Dorsolateral prefrontal cortex (tissue), 120 donors: ENCODE measurements at regions of chr7 and their contacts with region 1.

Region 1: DNA sequence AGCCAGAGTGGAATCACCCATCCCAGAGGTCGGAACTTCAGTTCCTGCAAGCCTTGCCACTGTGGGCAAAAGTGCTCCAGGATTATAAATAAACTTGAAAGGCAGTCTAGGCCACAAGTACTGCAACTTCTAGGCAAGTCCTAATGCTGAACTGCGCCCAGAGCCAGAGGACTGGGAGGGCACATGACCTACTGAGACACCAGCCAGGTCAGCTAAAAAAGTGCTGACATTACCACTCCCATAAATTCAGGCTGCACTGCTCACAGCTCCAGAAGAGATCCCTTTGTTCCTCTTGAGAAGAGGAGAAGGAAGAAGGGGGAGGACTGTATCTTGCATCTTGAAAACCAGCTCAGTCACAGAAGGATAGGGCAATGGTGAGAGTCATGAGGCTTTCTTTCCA is 1084.1 kb upstream of the PHF14 start:
- DNase-seq: no peak
- H3K4me3 ChIP-seq: no peak overlapping the region
- H3K27ac ChIP-seq: no peak overlapping the region
- H3K27me3 ChIP-seq: no peaks in the 10 kb centered on the region
- CTCF ChIP-seq: no peak

Region 2: DNA sequence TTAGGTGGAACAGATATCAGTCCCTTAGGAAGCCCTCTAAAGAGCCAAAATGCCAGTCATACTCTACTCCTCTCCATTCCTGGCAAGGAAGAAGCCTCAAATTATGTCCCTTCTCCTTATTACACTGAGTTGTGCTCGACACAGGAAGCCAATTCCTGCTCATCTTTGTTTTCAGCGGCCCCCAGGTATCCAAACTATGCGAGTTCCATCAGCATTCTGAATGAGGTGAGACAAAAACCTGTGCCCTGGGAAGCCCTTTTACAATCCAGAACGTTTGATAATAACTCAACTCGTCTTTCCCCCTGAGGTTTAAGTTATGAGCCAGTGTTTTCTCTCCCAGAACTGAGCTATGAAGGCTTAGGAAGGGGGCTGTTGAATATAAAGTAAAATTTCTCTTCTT is 875.6 kb before region 1 on chr7:
- intact Hi-C with region 1: loop called in 1 of 2 experiments (anchors 10 kb)
- DNase-seq: no peak
- H3K4me3 ChIP-seq: no peak overlapping the region
- H3K27ac ChIP-seq: no peak overlapping the region
- H3K27me3 ChIP-seq: no peaks in the 10 kb centered on the region
- CTCF ChIP-seq: no peak